ENCODE measurements at regions of chr22 and their contacts with region 1.

Region 1: DNA sequence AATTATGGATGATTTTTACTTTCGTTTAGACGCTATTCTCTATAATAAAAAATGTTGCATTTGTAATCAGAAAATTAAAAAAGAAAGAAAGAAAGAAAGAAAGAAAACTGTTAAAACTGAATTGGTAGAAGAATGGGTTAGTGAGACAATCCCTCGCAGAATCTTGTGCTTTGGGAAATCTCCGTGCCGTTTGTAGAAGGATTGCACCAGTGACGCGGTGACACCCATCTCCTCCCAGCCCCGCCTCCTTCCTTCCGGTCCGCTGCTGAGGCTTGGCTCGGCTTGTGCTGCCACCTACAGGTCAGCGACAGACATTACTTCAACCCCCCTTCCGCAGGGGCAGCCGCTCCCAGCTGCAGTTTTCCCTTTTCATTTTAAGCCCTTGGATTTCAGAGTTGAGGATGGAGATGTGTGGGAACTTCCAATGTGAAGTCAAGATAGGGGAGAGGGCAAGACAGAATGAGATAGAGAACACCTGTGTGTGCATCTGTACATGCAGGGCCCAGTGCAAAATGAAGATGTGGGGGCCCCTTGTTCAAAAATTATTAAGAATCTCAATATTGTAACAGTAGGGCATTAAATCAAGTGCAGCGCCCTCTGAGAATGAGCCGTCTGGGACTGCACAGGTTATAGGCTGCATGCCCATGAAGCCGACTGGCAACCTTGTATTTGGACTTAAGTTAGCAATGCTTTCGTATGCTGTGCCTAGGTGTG is 41.1 kb downstream of the TST start:
- DNase-seq: peak; percentile 96
- H3K4me3 ChIP-seq: peak overlapping the region; percentile 45 to 61
- H3K27ac ChIP-seq: no peak overlapping the region
- H3K4me1 ChIP-seq: no peaks in the 10 kb centered on the region; a peak in 1 of 4 replicates
- H3K27me3 ChIP-seq: no peaks in the 10 kb centered on the region; the same call in 1 of the 2 replicates
- CTCF ChIP-seq: peak; percentile 91
- EP300 ChIP-seq: no peak
- RAD21 ChIP-seq: peak; percentile 94

Region 2: GRCh38 chr22:36757668-36758211 is 220.4 kb before region 1 on chr22:
- CTCF ChIA-PET with region 1: interaction called, 13 read pairs
- POLR2A ChIA-PET with region 1: no interaction called
- DNase-seq: peak; percentile 83
- H3K4me3 ChIP-seq: no peak overlapping the region; a peak in 1 of 4 replicates
- H3K27ac ChIP-seq: no peak overlapping the region; a peak in 1 of 4 replicates
- H3K4me1 ChIP-seq: peaks cover 0 to 5% of the 10 kb centered on the region in 2 experiments; a peak in 1 of 4 replicates
- H3K27me3 ChIP-seq: no peaks in the 10 kb centered on the region
- CTCF ChIP-seq: peak; percentile 75
- EP300 ChIP-seq: no peak
- RAD21 ChIP-seq: peak; percentile 67

Region 3: DNA sequence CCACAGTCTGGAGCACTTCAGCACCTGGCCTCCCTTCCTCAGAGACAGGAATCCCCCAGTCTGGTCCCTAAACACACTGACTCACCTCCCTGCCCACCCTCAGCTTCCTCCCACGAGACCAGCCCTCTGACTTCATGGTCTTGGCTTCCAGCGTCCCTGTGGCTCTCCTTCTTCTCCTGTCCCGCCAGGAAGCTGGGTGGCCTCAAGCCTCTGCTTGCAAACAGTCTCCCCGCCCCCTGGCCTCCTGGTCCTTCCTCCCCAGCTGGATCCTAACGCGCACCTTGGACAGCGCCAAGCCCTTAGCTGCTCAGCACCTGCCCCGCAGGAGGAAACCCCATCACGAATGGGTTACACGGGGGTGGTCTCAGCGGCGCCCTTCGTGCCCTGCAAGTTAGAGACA is 112.8 kb before region 1 on chr22:
- CTCF ChIA-PET with region 1: interaction called, 11 read pairs
- POLR2A ChIA-PET with region 1: no interaction called
- DNase-seq: no peak
- H3K4me3 ChIP-seq: no peak overlapping the region
- H3K27ac ChIP-seq: no peak overlapping the region
- H3K4me1 ChIP-seq: no peaks in the 10 kb centered on the region; a peak in 1 of 4 replicates
- H3K27me3 ChIP-seq: no peaks in the 10 kb centered on the region
- CTCF ChIP-seq: no peak
- EP300 ChIP-seq: no peak
- RAD21 ChIP-seq: no peak

Region 4: DNA sequence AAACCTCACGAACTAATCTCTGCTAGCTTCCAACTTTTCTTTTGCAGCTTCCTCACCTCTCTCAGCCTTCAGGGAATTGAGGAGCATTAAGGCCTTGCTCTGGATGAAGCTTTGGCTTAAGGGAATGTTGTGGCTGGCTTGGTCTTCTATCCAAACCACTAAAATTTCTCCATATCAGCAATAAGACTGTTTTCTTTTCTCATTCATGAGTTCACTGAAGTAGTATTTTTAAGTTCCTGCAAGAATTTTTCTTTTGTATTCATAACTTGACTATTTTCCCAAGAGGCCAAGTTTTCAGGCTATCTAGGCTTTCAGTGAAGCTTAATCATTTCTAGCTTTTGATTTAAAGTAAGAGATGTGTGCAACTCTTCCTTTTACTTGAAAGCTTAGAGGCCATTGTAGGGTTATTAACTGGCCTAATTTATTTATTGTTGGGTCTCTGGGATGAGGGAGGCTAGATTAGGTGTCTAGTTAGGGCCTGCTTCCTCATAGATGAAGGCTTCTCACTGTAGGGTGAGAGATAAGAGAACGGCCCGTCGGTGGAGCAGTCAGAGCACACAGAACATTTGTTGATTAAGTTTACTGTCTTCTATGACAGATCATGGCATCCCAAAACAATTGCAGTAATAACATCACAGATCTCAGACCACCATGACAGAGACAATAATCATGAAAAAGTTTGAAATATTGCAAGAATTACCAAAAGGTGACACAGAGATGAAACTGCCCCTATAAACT is 31.5 kb before region 1 on chr22:
- CTCF ChIA-PET with region 1: no interaction called
- POLR2A ChIA-PET with region 1: no interaction called
- DNase-seq: no peak
- H3K4me3 ChIP-seq: no peak overlapping the region
- H3K27ac ChIP-seq: no peak overlapping the region
- H3K4me1 ChIP-seq: no peaks in the 10 kb centered on the region
- H3K27me3 ChIP-seq: no peaks in the 10 kb centered on the region; the same call in 1 of the 2 replicates
- CTCF ChIP-seq: no peak
- EP300 ChIP-seq: no peak
- RAD21 ChIP-seq: no peak

Region 5: DNA sequence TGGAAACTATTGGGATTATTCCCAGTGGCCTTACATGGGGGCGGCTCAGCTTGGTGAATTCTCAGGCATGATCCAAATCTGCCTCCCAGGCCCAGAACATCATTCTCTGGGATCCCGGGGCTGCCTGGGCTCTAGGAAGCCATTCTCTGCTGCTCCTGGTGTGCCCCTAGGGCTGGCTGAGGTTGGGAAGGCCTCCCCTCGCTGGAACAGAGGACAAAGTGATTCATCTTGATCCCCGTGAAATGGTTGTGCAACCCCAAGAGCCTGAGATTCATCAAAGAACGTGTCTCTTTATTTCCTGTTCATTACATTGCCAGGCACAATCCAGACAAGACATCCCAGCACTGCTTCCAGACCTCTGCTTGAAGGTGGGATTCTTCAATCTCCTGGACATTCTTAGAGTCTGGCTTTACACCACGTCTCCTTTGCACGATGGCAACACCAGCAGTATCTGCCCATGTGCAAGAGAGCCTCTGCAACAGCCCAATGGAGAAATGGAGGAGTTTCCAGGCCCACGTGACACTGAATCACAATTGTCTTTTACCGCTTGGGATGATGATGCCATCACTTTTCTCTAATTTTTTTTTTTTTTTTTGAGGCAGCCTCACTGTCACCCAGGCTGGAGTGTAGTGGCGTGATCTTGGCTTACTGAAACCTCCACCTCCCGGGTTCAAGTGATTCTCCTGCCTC is 11.1 kb before region 1 on chr22:
- CTCF ChIA-PET with region 1: interaction called, 28 read pairs
- POLR2A ChIA-PET with region 1: no interaction called
- DNase-seq: no peak
- H3K4me3 ChIP-seq: no peak overlapping the region
- H3K27ac ChIP-seq: no peak overlapping the region
- H3K4me1 ChIP-seq: no peaks in the 10 kb centered on the region
- H3K27me3 ChIP-seq: peaks cover 26% of the 10 kb centered on the region; the same call in 1 of the 2 replicates
- CTCF ChIP-seq: no peak
- EP300 ChIP-seq: no peak
- RAD21 ChIP-seq: no peak

Region 6: DNA sequence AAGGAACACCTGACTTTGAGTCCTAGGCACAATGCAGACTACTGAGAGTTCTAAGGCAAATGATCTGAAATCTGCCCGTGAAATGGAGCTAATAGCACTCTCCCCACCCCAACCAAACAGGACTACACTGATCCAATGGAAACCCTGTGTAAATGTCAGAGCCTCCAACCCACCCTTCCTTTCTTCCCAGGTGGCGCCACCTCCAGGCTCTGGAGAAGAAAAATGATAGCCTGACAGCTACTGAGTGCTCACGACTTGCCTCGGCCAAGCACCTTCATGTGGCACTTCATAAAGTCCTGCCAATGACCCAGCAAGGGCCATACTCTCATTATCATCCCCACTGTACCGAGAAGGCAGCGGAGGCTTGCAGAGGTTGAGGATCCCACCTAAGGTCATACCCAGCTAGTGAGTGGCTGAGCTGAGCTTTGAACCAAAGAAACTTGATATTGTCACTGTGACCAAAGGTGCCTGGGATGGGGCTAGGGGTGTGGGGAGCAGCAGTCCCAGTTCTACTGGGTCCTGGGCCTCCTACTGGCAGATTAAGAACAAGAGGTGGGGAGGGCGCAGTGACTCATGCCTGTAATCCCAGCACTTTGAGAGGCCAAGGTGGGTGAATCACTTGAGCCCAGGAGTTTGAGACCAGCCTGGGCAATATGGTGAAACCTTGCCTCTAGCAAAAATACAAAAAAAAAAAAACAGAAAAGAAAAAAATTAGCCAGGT is 20.7 kb after region 1 on chr22:
- CTCF ChIA-PET with region 1: interaction called, 11 read pairs
- POLR2A ChIA-PET with region 1: no interaction called
- DNase-seq: no peak
- H3K4me3 ChIP-seq: no peak overlapping the region
- H3K27ac ChIP-seq: no peak overlapping the region
- H3K4me1 ChIP-seq: no peaks in the 10 kb centered on the region
- H3K27me3 ChIP-seq: peaks cover 12% of the 10 kb centered on the region; the same call in 1 of the 2 replicates
- CTCF ChIP-seq: peak; percentile 25
- EP300 ChIP-seq: no peak
- RAD21 ChIP-seq: no peak

Region 7: GRCh38 chr22:37032546-37033460 is 54.7 kb after region 1 on chr22:
- CTCF ChIA-PET with region 1: no interaction called
- POLR2A ChIA-PET with region 1: no interaction called
- DNase-seq: no peak
- H3K4me3 ChIP-seq: no peak overlapping the region
- H3K27ac ChIP-seq: no peak overlapping the region
- H3K4me1 ChIP-seq: no peaks in the 10 kb centered on the region
- H3K27me3 ChIP-seq: no peaks in the 10 kb centered on the region
- CTCF ChIP-seq: no peak
- EP300 ChIP-seq: no peak
- RAD21 ChIP-seq: no peak

Measured in SK-N-SH (cell line).